ENCODE measurements at regions of chr15 and their contacts with region 1.

Region 1: GRCh38 chr15:74322181-74323076 is 45.0 kb downstream of the CYP11A1 start:
- DNase-seq: peak; percentile 81
- ATAC-seq: peak; percentile 89
- H3K4me3 Mint-ChIP-seq: no peak overlapping the region
- H3K27ac Mint-ChIP-seq: no peak overlapping the region
- H3K4me1 Mint-ChIP-seq: peaks cover 18% of the 10 kb centered on the region
- H3K27me3 Mint-ChIP-seq: no peaks in the 10 kb centered on the region

Region 2: GRCh38 chr15:74127260-74127953 is 195.0 kb before region 1 on chr15:
- CTCF ChIA-PET with region 1: interaction called, 29 read pairs
- DNase-seq: peak; percentile 89
- ATAC-seq: peak; percentile 95
- H3K4me3 Mint-ChIP-seq: no peak overlapping the region
- H3K27ac Mint-ChIP-seq: no peak overlapping the region
- H3K4me1 Mint-ChIP-seq: peaks cover 13% of the 10 kb centered on the region
- H3K27me3 Mint-ChIP-seq: peaks cover 81% of the 10 kb centered on the region

Region 3: DNA sequence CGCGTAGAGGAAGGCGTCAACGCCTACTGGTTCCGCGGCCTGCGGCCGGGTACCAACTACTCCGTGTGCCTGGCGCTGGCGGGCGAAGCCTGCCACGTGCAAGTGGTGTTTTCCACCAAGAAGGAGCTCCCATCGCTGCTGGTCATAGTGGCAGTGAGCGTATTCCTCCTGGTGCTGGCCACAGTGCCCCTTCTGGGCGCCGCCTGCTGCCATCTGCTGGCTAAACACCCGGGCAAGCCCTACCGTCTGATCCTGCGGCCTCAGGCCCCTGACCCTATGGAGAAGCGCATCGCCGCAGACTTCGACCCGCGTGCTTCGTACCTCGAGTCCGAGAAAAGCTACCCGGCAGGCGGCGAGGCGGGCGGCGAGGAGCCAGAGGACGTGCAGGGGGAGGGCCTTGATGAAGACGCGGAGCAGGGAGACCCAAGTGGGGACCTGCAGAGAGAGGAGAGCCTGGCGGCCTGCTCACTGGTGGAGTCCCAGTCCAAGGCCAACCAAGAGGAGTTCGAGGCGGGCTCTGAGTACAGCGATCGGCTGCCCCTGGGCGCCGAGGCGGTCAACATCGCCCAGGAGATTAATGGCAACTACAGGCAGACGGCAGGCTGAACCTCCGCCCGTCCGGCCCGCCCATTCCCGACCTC is 187.9 kb before region 1 on chr15:
- CTCF ChIA-PET with region 1: interaction called, 29 read pairs
- DNase-seq: no peak
- ATAC-seq: no peak
- H3K4me3 Mint-ChIP-seq: no peak overlapping the region
- H3K27ac Mint-ChIP-seq: peak overlapping the region; percentile 30
- H3K4me1 Mint-ChIP-seq: peaks cover 23% of the 10 kb centered on the region
- H3K27me3 Mint-ChIP-seq: peaks cover 90% of the 10 kb centered on the region